Psoas muscle (tissue), 8 donors: ENCODE measurements at regions of chr20 and their contacts with region 1.

Region 1: GRCh38 chr20:21235484-21236445 is 67.4 kb upstream of the XRN2 start:
- DNase-seq: peak; percentile 37 to 74
- ATAC-seq: peak; percentile 68 to 90 (median 86)
- H3K4me3 ChIP-seq: no peak overlapping the region
- H3K27ac ChIP-seq: no peak overlapping the region
- H3K4me1 ChIP-seq: no peaks in the 10 kb centered on the region
- H3K27me3 ChIP-seq: no peaks in the 10 kb centered on the region
- CTCF ChIP-seq: peak; percentile 60

Region 2: GRCh38 chr20:21373436-21373835 is 137.7 kb after region 1 on chr20:
- intact Hi-C with region 1: loop called in 1 of 2 experiments (anchors 10 kb)
- DNase-seq: no peak
- ATAC-seq: no peak
- H3K4me3 ChIP-seq: no peak overlapping the region
- H3K27ac ChIP-seq: no peak overlapping the region
- H3K4me1 ChIP-seq: no peaks in the 10 kb centered on the region
- H3K27me3 ChIP-seq: no peaks in the 10 kb centered on the region
- CTCF ChIP-seq: no peak

Region 3: DNA sequence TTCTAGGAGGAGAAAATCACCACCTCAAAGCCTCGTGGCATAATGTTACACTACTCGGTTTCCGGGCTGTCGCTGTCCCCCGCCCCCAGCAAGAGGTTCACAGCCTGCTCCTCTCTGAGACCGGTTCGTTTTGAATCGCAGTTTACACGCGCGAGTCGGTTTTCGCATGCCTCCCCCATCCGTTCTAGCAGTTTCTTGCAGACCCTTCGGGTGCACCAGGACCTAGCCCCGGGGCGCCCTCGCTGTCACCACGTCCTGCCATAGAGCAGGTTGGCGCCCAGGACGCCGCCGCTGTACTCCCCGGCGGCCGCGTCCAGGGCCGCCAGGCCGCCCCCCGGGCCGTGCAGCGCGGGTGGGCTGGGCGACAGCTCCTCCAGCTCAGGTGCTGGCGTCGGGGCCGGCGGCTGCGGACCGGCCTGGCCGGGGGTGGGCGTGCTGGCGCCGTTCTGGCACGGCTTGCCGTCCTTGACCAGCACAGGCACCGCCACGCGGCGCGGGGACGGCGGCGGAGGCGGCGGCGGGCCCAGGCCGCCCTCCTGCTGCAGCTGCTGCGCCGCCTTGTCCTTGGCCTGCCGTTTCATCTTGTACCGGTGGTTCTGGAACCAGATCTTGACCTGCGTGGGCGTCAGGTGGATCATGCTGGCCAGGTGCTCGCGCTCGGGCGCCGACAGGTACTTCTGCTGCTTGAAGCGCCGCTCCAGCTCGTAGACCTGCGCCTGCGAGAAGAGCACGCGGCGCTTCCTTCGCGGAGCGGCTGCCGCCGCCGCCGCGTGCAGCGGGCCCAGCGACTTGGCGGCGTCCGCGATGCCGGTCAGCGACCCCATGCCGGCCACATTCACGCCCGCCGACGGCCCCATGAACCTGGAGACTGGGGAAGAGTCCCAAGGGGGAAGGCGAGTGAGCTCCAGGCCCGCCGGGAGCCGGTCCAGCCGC is 160.2 kb after region 1 on chr20:
- intact Hi-C with region 1: loop called in 1 of 2 experiments (anchors 10 kb)
- DNase-seq: no peak
- ATAC-seq: no peak
- H3K4me3 ChIP-seq: peak overlapping the region; percentile 46
- H3K27ac ChIP-seq: no peak overlapping the region
- H3K4me1 ChIP-seq: peaks cover 5% of the 10 kb centered on the region
- H3K27me3 ChIP-seq: peaks cover 13 to 98% (median 26%) of the 10 kb centered on the region in 3 donors
- CTCF ChIP-seq: no peak

Region 4: GRCh38 chr20:21505161-21505809 is 269.5 kb after region 1 on chr20:
- intact Hi-C with region 1: loop called (anchors 1 to 2 kb)
- DNase-seq: peak; percentile 58 to 77
- ATAC-seq: peak; percentile 77 to 86 (median 84)
- H3K4me3 ChIP-seq: peak overlapping the region; percentile 62
- H3K27ac ChIP-seq: no peak overlapping the region
- H3K4me1 ChIP-seq: peaks cover 21% of the 10 kb centered on the region
- H3K27me3 ChIP-seq: peaks cover 4 to 88% (median 57%) of the 10 kb centered on the region in 3 donors
- CTCF ChIP-seq: peak; percentile 97